H1 (cell line): ENCODE measurements at regions of chr11 and their contacts with region 1.

Region 1: DNA sequence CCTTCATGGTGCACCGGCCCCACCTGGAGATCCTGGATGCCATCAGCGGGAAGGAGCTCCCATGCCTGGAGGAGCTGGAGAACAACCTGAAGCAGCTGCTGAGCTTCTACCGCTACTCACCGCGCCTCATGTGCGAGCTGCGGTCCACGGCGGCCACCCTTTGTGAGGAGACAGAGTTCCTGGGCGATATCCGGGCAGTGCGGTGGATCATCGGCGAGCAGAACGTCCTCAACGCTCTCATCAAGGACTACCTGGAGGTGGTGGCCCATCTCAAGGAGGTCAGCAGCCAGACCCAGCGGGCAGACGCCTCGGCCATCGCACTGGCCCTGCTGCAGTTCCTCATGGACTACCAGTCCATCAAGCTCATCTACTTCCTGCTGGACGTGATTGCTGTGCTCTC is 59.2 kb downstream of the SYT13 start:
- DNase-seq: no peak
- H3K4me3 ChIP-seq: no peak overlapping the region
- H3K27ac ChIP-seq: no peak overlapping the region
- H3K4me1 ChIP-seq: no peaks in the 10 kb centered on the region
- H3K27me3 ChIP-seq: no peaks in the 10 kb centered on the region; a peak in 1 of 7 replicates
- CTCF ChIP-seq: no peak
- EP300 ChIP-seq: no peak
- POLR2A ChIP-seq: no peak
- RAD21 ChIP-seq: no peak

Region 2: DNA sequence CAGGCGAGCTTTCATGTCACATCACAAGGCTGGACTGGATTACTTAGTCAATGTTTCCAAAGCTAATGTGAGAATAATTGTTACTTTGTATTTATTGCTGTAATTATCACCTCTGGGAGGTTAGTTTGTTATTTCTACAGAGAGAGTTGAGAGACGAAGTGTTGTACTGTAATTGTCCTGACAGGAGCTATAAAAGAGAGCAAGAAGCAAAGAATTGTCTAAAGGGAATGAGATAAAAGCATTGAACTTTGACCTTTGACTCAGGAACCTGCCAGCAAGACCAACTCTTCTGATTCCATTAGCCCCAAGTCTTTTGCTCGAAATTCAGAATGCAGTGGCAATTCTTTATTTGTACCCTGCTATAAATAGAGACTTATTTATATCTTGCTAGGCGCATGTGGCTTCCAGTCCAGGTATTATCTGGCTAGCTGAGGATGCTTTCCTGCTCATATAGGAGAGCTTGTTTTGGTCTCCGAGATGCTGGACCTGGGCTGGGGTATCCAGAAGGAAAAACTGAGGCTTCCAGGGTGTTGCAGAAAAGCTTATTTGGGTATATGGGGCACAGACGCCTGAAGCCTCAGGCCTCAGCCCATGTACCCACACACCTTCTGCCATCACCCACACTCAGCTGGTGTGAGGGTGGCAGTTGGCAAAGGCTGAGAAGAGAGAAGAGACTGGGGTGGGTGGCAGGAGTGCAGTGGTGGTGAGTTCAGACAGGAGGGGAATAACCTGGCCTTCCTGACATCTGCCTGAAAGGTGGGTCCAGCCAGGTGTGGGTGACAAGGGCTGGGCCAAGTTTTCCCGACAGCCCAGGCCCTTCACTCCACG is 18.5 kb after region 1 on chr11:
- CTCF ChIA-PET with region 1: interaction called, 64 read pairs
- POLR2A ChIA-PET with region 1: no interaction called
- DNase-seq: no peak
- H3K4me3 ChIP-seq: no peak overlapping the region
- H3K27ac ChIP-seq: no peak overlapping the region
- H3K4me1 ChIP-seq: no peaks in the 10 kb centered on the region
- H3K27me3 ChIP-seq: no peaks in the 10 kb centered on the region; a peak in 1 of 7 replicates
- CTCF ChIP-seq: no peak
- EP300 ChIP-seq: no peak
- POLR2A ChIP-seq: no peak
- RAD21 ChIP-seq: no peak

Region 3: GRCh38 chr11:45354976-45355705 is 128.2 kb after region 1 on chr11:
- CTCF ChIA-PET with region 1: no interaction called
- POLR2A ChIA-PET with region 1: no interaction called
- DNase-seq: peak in 1 of 2 experiments; percentile 91
- H3K4me3 ChIP-seq: peak overlapping the region; percentile 57 to 75 (median 72)
- H3K27ac ChIP-seq: no peak overlapping the region; the same call in 1 of the 2 replicates
- H3K4me1 ChIP-seq: peaks cover 0 to 8% (median 5%) of the 10 kb centered on the region in 4 experiments; a peak in 4 of 7 replicates
- H3K27me3 ChIP-seq: no peaks in the 10 kb centered on the region; a peak in 1 of 7 replicates
- CTCF ChIP-seq: no peak
- EP300 ChIP-seq: no peak
- POLR2A ChIP-seq: no peak
- RAD21 ChIP-seq: 0 out of 4 replicates have a peak, but pooled peaks of 1 of the 2 experiments have one; percentile 0